Activated T-helper 1 cell treated with anti-CD3 and anti-CD28 coated beads, Interleukin-12 subunit alpha, Interleukin-12 subunit beta, Interleukin-2, Interleukin-4 antibody, amounts not matched to agents 30 ng/mL and 10 ng/mL and 1 ng/mL, durations not matched to agents 14 hours and 24 hours and 36 hours (primary cell): ENCODE measurements at regions of chr14 and their contacts with region 1.

Region 1: GRCh38 chr14:67943947-67944346 is 124.4 kb downstream of the RAD51B start:
- DNase-seq: no peak
- H3K4me3 Mint-ChIP-seq: no peak overlapping the region
- H3K27ac Mint-ChIP-seq: no peak overlapping the region
- H3K4me1 Mint-ChIP-seq: no peaks in the 10 kb centered on the region
- H3K27me3 Mint-ChIP-seq: no peaks in the 10 kb centered on the region

Region 2: GRCh38 chr14:67856814-67857213 is 87.1 kb before region 1 on chr14:
- intact Hi-C with region 1: no loop called
- DNase-seq: no peak
- H3K4me3 Mint-ChIP-seq: no peak overlapping the region
- H3K27ac Mint-ChIP-seq: no peak overlapping the region
- H3K4me1 Mint-ChIP-seq: no peaks in the 10 kb centered on the region
- H3K27me3 Mint-ChIP-seq: peaks cover 2% of the 10 kb centered on the region

Region 3: GRCh38 chr14:68232300-68233055 is 288.5 kb after region 1 on chr14:
- intact Hi-C with region 1: loop called (anchors 5 kb)
- DNase-seq: peak; percentile 9
- H3K4me3 Mint-ChIP-seq: no peak overlapping the region
- H3K27ac Mint-ChIP-seq: no peak overlapping the region
- H3K4me1 Mint-ChIP-seq: peaks cover 7% of the 10 kb centered on the region
- H3K27me3 Mint-ChIP-seq: no peaks in the 10 kb centered on the region

Region 4: DNA sequence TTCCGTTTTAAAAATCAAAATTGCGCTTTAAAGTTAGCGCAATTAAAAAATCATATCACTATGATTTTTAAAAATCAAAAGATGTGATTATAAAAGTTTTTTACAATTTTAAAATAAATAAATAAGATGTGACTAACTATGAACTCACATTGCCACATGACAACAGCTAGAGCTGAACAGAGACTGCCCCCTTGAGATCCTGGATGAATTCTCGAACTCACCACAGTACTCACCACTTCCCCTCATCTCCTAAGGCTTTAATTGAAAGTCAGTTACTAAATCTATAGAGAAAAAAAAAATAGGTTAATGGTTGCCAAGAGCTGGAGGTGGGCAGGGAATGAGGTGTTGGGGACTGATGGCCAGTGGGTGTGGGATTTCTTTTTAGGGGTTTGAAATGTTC is 464.7 kb after region 1 on chr14:
- intact Hi-C with region 1: loop called (anchors 10 kb)
- DNase-seq: no peak
- H3K4me3 Mint-ChIP-seq: no peak overlapping the region
- H3K27ac Mint-ChIP-seq: no peak overlapping the region
- H3K4me1 Mint-ChIP-seq: peaks cover 34% of the 10 kb centered on the region
- H3K27me3 Mint-ChIP-seq: no peaks in the 10 kb centered on the region

Region 5: GRCh38 chr14:68816262-68816942 is 872.5 kb after region 1 on chr14:
- intact Hi-C with region 1: loop called (anchors 1 kb)
- DNase-seq: peak; percentile 84
- H3K4me3 Mint-ChIP-seq: peak overlapping the region; percentile 76
- H3K27ac Mint-ChIP-seq: peak overlapping the region; percentile 90
- H3K4me1 Mint-ChIP-seq: peaks cover 58% of the 10 kb centered on the region
- H3K27me3 Mint-ChIP-seq: no peaks in the 10 kb centered on the region